Activated B cell treated with CpG ODN at 0.5 μM for 24 hours (primary cell): ENCODE measurements at regions of chr2 and their contacts with region 1.

Region 1: DNA sequence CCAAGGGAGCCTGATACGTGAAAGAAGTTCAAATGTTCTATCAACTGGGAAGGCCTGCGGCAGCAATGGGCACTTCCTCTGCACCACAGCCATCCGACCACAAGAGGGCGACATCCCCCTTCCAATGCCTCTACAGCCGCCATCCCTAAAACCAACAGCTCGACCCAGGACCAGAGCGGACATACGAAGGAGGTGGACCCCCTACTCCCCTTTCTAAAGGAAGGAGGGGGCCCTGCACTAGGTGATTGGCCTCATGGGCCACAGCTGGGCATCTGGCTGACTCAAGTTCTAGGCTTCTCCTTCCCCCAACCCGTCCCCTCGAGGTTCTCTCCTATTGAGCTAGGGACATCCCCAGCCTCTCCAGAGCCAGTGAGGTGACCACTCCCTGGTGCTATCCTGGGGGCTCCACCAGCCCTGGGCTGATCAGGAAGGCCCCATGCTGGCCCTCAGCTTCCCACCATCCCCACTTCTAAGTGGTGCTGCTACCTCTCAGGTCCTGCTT is 217.2 kb downstream of the TNS1 start:
- DNase-seq: peak; percentile 75
- ATAC-seq: peak; percentile 58
- H3K4me3 Mint-ChIP-seq: no peak overlapping the region
- H3K27ac Mint-ChIP-seq: no peak overlapping the region
- H3K4me1 Mint-ChIP-seq: peaks cover 18% of the 10 kb centered on the region
- H3K27me3 Mint-ChIP-seq: no peaks in the 10 kb centered on the region
- CTCF ChIP-seq: peak; percentile 80

Region 2: DNA sequence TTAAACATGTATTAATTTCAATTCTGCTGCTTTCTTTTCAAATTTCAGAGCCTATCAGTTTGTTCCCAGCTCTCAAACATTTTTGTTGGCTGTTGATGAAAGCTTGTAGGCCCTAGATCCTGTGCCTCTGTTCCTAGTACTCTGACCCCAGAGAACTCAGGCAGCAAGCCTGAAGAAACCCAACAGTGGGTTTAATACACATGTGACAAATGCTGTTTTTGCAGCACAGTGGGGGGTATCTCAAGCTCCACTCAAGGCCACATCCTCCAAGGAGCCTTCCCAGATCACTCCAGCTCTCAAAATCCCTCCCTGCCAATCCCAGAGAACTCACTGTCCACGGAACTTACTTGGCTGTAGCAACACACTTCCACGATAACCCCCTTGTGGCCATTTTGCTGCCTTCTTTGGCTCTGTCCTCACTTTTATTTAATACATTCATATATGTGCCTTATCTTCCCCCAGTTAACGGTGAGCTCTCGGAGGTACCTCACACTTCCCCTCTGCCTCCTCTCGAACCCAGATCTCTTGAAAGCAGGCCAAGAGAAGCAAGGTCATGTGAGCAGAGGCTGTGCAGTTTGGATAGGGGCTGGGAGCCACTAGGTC is 94.8 kb after region 1 on chr2:
- CTCF ChIA-PET with region 1: interaction called, 235 read pairs
- POLR2A ChIA-PET with region 1: interaction called, 3 read pairs
- intact Hi-C with region 1: no loop called
- DNase-seq: no peak
- ATAC-seq: no peak
- H3K4me3 Mint-ChIP-seq: no peak overlapping the region
- H3K27ac Mint-ChIP-seq: no peak overlapping the region
- H3K4me1 Mint-ChIP-seq: peaks cover under 1% of the 10 kb centered on the region
- H3K27me3 Mint-ChIP-seq: no peaks in the 10 kb centered on the region
- CTCF ChIP-seq: no peak

Region 3: GRCh38 chr2:217988014-217988839 is 202.6 kb after region 1 on chr2:
- CTCF ChIA-PET with region 1: interaction called, 39 read pairs
- POLR2A ChIA-PET with region 1: no interaction called
- intact Hi-C with region 1: loop called (anchors 1 kb)
- DNase-seq: peak; percentile 60
- ATAC-seq: peak; percentile 69
- H3K4me3 Mint-ChIP-seq: no peak overlapping the region
- H3K27ac Mint-ChIP-seq: no peak overlapping the region
- H3K4me1 Mint-ChIP-seq: peaks cover 2% of the 10 kb centered on the region
- H3K27me3 Mint-ChIP-seq: peaks cover 11% of the 10 kb centered on the region
- CTCF ChIP-seq: no peak

Region 4: GRCh38 chr2:218033590-218034496 is 248.2 kb after region 1 on chr2:
- CTCF ChIA-PET with region 1: interaction called, 18 read pairs
- POLR2A ChIA-PET with region 1: no interaction called
- intact Hi-C with region 1: loop called (anchors 1 kb)
- DNase-seq: no peak
- ATAC-seq: no peak
- H3K4me3 Mint-ChIP-seq: peak overlapping the region; percentile 70
- H3K27ac Mint-ChIP-seq: no peak overlapping the region
- H3K4me1 Mint-ChIP-seq: peaks cover 10% of the 10 kb centered on the region
- H3K27me3 Mint-ChIP-seq: peaks cover 8% of the 10 kb centered on the region
- CTCF ChIP-seq: no peak

Region 5: DNA sequence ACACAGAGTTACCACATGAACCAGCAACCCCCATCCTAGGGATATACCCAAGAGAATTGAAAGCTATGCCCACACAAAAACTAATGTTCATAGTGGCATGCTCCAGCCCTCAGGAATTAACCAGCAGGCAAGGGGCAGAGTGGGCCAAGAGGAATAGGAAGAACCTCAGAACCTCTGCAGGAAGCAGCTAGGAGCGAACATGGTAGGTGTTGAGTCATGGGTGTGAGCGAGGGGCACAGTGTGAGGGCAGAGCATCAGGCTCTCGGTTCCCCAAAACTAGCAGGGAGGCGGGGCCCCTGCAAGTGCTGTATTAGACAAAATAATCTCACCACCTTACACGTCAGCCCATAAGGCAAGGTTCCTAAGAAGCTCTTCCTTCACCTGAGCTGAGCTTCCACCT is 277.9 kb after region 1 on chr2:
- CTCF ChIA-PET with region 1: interaction called, 8 read pairs
- POLR2A ChIA-PET with region 1: no interaction called
- intact Hi-C with region 1: loop called (anchors 1 kb)
- DNase-seq: no peak
- ATAC-seq: peak; percentile 93
- H3K4me3 Mint-ChIP-seq: no peak overlapping the region
- H3K27ac Mint-ChIP-seq: no peak overlapping the region
- H3K4me1 Mint-ChIP-seq: peaks cover 14% of the 10 kb centered on the region
- H3K27me3 Mint-ChIP-seq: peaks cover 22% of the 10 kb centered on the region
- CTCF ChIP-seq: no peak